Naive thymus-derived CD4-positive, alpha-beta T cell (primary cell): ENCODE measurements at regions of chr7 and their contacts with region 1.

Region 1: GRCh38 chr7:93799750-93800357 is 90.7 kb downstream of the TFPI2 start:
- DNase-seq: no peak
- ATAC-seq: no peak
- H3K4me3 ChIP-seq: no peak overlapping the region
- H3K4me3 Mint-ChIP-seq: no peak overlapping the region
- H3K27ac ChIP-seq: no peak overlapping the region
- H3K27ac Mint-ChIP-seq: no peak overlapping the region
- H3K4me1 ChIP-seq: no peaks in the 10 kb centered on the region
- H3K4me1 Mint-ChIP-seq: no peaks in the 10 kb centered on the region
- H3K27me3 ChIP-seq: no peaks in the 10 kb centered on the region
- H3K27me3 Mint-ChIP-seq: no peaks in the 10 kb centered on the region

Region 2: GRCh38 chr7:93779115-93779514 is 20.7 kb before region 1 on chr7:
- CTCF ChIA-PET with region 1: interaction called, 10 read pairs
- POLR2A ChIA-PET with region 1: no interaction called
- intact Hi-C with region 1: no loop called
- DNase-seq: no peak
- ATAC-seq: no peak
- H3K4me3 ChIP-seq: no peak overlapping the region
- H3K4me3 Mint-ChIP-seq: no peak overlapping the region
- H3K27ac ChIP-seq: no peak overlapping the region
- H3K27ac Mint-ChIP-seq: no peak overlapping the region
- H3K4me1 ChIP-seq: no peaks in the 10 kb centered on the region
- H3K4me1 Mint-ChIP-seq: no peaks in the 10 kb centered on the region
- H3K27me3 ChIP-seq: no peaks in the 10 kb centered on the region
- H3K27me3 Mint-ChIP-seq: no peaks in the 10 kb centered on the region